ENCODE measurements at regions of chr22 and their contacts with region 1.

Region 1: GRCh38 chr22:17057959-17058814 is 26.6 kb upstream of the IL17RA start:
- DNase-seq: peak; percentile 47
- H3K4me3 Mint-ChIP-seq: no peak overlapping the region
- H3K27ac Mint-ChIP-seq: no peak overlapping the region
- H3K4me1 Mint-ChIP-seq: no peaks in the 10 kb centered on the region
- H3K27me3 Mint-ChIP-seq: peaks cover 13% of the 10 kb centered on the region

Region 2: DNA sequence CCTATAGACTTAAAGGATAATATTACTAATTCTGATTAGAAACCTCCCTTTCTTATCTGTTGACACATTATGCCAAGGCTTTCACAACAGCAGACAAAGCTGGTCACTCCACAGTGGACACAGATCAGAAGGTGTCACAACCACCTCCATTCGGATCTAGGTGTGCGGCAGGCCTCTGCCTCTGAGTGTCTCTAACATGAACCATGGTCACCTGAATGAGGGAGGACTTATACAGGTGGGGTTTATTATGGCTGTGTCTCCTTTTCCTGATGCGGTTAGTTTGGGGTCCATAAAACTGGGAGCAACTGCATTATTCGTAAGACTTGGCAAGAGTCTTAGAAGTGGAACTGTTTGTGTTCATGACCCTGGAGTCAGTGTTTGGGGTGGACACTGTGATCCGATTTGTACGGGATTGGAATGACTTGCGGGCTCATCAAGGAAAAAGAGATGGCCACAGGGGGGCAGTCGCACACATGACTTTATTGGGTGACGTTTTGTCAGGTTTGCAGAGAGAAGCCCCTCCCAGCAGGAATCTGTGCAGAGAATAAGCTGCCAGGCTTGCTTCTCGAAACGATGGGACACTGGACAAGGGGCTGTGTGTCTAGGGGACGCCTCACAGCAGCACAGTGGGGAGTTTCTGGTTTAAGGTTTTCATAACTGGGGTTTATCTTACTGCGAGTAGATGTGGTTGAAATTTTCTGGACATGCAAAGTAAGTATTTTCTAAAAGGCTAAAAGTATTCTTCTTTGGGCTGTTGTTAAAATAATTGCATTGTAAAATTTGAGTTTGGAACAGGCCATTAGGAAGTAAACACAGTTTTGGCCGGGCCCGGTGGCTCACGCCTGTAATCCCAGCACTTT is 140.8 kb before region 1 on chr22:
- CTCF ChIA-PET with region 1: interaction called, 11 read pairs
- POLR2A ChIA-PET with region 1: no interaction called
- DNase-seq: peak; percentile 55
- H3K4me3 Mint-ChIP-seq: no peak overlapping the region
- H3K27ac Mint-ChIP-seq: no peak overlapping the region
- H3K4me1 Mint-ChIP-seq: peaks cover 7% of the 10 kb centered on the region
- H3K27me3 Mint-ChIP-seq: peaks cover 23% of the 10 kb centered on the region

Region 3: GRCh38 chr22:16961477-16962186 is 96.6 kb before region 1 on chr22:
- CTCF ChIA-PET with region 1: no interaction called
- POLR2A ChIA-PET with region 1: no interaction called
- DNase-seq: peak; percentile 9
- H3K4me3 Mint-ChIP-seq: no peak overlapping the region
- H3K27ac Mint-ChIP-seq: no peak overlapping the region
- H3K4me1 Mint-ChIP-seq: no peaks in the 10 kb centered on the region
- H3K27me3 Mint-ChIP-seq: no peaks in the 10 kb centered on the region

Region 4: DNA sequence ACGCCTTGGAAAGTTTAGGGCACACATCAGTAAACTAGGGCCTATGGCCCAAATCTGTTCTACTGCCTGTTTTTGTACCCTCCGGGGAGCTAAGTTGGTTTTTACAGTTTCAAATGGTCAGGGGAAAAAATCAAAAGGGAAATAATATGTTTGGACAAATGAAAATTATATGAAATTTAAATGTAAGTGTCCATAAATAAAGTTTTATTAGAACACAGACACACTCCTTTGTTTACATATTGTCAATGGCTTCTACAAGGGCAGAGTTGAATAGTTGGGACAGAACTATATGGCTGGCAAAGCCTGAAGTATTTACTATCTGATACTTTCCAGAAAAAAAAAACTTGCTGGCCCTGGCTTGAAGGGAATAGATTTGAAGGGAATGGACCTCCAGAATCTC is 23.1 kb after region 1 on chr22:
- CTCF ChIA-PET with region 1: no interaction called
- POLR2A ChIA-PET with region 1: no interaction called
- DNase-seq: no peak
- H3K4me3 Mint-ChIP-seq: no peak overlapping the region
- H3K27ac Mint-ChIP-seq: no peak overlapping the region
- H3K4me1 Mint-ChIP-seq: peaks cover 21% of the 10 kb centered on the region
- H3K27me3 Mint-ChIP-seq: peaks cover 29% of the 10 kb centered on the region

Measured in activated CD4-positive, alpha-beta memory T cell treated with anti-CD3 and anti-CD28 coated beads, Interleukin-2, amount 10 ng/mL, durations not matched to agents 7 days and 5 days (primary cell).